ENCODE measurements at regions of chr1 and their contacts with region 1.

Region 1: DNA sequence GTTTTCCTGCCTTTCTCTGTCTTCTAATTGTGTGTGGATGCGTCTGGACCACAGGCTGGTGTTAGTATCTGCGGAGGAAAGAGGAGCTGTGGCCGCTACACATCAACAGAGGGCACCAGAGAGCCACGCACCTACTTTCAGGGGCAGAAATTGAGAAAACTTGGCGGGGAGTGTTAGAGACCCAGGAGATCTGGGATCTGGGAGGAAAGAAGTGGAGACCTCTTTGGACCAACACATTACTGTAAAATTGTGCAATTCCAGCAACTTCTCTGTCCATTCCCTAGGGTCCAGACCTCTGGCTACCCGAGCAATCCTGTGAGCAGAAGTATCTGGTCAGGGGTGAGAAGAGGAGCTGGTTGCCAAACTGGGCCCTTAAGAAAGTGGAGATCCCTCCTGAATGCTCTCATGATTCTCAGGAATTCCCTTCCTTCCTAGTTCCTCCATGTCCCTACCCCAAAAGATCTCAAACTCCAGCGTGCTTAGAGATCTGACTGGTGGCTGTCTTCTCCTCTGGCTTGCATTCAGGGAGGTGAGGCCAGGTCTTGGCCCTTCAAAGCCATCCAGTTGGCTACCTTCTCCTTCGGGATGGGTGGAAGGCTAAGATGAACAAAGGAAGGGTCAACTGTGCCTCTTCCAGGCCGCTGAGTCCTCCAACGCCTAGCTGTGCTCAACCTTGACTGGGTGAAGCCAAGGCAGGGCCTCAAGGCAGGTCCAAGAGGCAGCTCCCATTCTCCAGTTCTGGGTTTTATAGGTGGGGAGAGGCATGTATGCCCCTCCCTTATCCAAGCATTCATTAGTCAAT is 1.2 kb upstream of the KIRREL1 start:
- DNase-seq: peak; percentile 47
- ATAC-seq: no peak
- H3K4me3 Mint-ChIP-seq: no peak overlapping the region
- H3K27ac Mint-ChIP-seq: no peak overlapping the region
- H3K4me1 Mint-ChIP-seq: no peaks in the 10 kb centered on the region
- H3K27me3 Mint-ChIP-seq: peaks cover 40% of the 10 kb centered on the region

Region 2: DNA sequence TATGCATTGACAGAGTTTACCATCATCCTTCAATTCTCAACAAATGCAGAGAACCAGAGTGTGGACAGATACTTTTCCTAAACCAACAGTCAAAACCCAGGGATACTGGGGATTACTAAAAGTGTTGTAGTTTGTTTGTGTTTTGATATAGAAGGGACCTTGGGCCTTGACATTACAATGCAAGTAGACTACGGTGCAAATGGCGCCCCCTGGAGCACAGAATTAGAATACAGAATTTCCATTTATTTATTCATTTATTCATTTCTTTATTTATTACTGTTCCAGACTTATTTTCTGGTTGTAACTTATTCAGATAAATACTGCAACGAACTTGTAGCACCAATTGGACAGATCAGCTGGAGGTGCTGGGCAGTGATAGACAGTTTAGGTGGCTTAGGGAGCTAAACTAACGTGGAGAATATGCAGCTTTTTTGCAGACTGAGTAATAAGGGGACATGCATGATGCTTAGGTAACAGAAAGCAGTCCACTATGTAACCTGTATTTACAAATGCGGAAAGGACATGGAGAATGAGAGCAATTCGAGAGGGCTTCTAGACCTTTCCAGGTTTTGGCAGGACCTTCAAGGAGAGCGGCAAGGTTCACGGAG is 43.8 kb after region 1 on chr1:
- CTCF ChIA-PET with region 1: interaction called, 14 read pairs
- DNase-seq: no peak
- ATAC-seq: no peak
- H3K4me3 Mint-ChIP-seq: no peak overlapping the region
- H3K27ac Mint-ChIP-seq: no peak overlapping the region
- H3K4me1 Mint-ChIP-seq: no peaks in the 10 kb centered on the region
- H3K27me3 Mint-ChIP-seq: no peaks in the 10 kb centered on the region

Region 3: DNA sequence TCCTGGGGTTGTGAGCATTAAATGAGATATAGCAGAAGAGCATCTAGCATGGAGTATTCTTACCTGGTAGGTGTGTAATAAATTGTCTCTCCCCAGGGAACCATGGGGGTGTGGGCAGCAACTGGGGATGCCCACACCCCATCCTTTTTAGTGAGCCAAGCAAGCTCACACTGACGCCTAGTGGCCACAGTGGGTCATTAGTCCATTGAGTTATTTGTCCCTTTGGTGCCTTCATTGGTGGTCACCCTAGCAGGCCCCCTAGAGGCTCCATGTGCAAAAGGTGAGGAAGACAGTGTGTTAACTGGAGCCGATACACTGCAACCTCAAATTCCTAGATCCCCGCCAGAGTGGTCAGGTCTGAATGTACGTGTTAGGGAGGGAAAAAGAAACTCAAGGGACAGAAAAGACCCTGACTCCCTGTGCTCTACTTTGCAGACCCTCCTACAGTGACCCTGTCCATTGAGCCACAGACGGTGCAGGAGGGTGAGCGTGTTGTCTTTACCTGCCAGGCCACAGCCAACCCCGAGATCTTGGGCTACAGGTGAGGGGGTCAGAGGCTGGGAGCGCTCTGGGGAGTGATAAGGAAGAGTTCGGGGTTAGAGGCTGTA is 95.2 kb after region 1 on chr1:
- CTCF ChIA-PET with region 1: interaction called, 11 read pairs
- DNase-seq: peak; percentile 49
- ATAC-seq: peak; percentile 47
- H3K4me3 Mint-ChIP-seq: no peak overlapping the region
- H3K27ac Mint-ChIP-seq: no peak overlapping the region
- H3K4me1 Mint-ChIP-seq: no peaks in the 10 kb centered on the region
- H3K27me3 Mint-ChIP-seq: no peaks in the 10 kb centered on the region

Region 4: DNA sequence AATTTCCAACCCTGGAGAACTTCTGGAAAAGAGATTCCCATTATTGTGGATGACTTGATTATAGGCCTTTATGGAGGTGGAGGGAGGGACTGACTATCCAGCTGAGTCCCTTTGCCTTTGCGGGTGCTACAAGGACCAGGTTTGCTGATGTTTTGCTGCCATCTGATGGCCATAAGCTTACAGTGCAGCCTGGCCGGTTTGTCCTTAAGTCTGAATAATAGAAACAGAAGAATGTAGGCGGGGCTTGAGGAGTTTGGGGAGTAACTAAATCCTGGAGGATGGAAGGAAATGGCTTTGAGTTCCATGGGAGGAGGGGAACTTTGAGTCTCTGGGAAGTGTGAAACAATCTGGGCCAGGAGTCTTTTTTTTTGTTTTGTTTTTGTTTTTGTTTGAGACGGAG is 132.8 kb after region 1 on chr1:
- CTCF ChIA-PET with region 1: interaction called, 30 read pairs
- DNase-seq: peak; percentile 82
- ATAC-seq: peak; percentile 90
- H3K4me3 Mint-ChIP-seq: no peak overlapping the region
- H3K27ac Mint-ChIP-seq: no peak overlapping the region
- H3K4me1 Mint-ChIP-seq: peaks cover 12% of the 10 kb centered on the region
- H3K27me3 Mint-ChIP-seq: peaks cover 62% of the 10 kb centered on the region